Activated T-helper 1 cell treated with anti-CD3 and anti-CD28 coated beads, Interleukin-12 subunit alpha, Interleukin-12 subunit beta, Interleukin-2, Interleukin-4 antibody, amounts not matched to agents 30 ng/mL and 10 ng/mL and 1 ng/mL, durations not matched to agents 14 hours and 24 hours and 36 hours (primary cell): ENCODE measurements at regions of chr1 and their contacts with region 1.

Region 1: GRCh38 chr1:155227261-155228095 is 19.0 kb downstream of the MTX1 start:
- DNase-seq: peak; percentile 98
- H3K4me3 Mint-ChIP-seq: peak overlapping the region; percentile 95
- H3K27ac Mint-ChIP-seq: peak overlapping the region; percentile 92
- H3K4me1 Mint-ChIP-seq: peaks cover 15% of the 10 kb centered on the region
- H3K27me3 Mint-ChIP-seq: no peaks in the 10 kb centered on the region

Region 2: GRCh38 chr1:155017041-155017945 is 210.2 kb before region 1 on chr1:
- intact Hi-C with region 1: no loop called
- DNase-seq: peak; percentile 81
- H3K4me3 Mint-ChIP-seq: peak overlapping the region; percentile 69
- H3K27ac Mint-ChIP-seq: peak overlapping the region; percentile 7
- H3K4me1 Mint-ChIP-seq: peaks cover 54% of the 10 kb centered on the region
- H3K27me3 Mint-ChIP-seq: no peaks in the 10 kb centered on the region

Region 3: GRCh38 chr1:155193275-155193990 is 34.0 kb before region 1 on chr1:
- intact Hi-C with region 1: loop called (anchors 1 kb)
- DNase-seq: peak; percentile 72
- H3K4me3 Mint-ChIP-seq: peak overlapping the region; percentile 88
- H3K27ac Mint-ChIP-seq: peak overlapping the region; percentile 97
- H3K4me1 Mint-ChIP-seq: peaks cover 39% of the 10 kb centered on the region
- H3K27me3 Mint-ChIP-seq: no peaks in the 10 kb centered on the region

Region 4: DNA sequence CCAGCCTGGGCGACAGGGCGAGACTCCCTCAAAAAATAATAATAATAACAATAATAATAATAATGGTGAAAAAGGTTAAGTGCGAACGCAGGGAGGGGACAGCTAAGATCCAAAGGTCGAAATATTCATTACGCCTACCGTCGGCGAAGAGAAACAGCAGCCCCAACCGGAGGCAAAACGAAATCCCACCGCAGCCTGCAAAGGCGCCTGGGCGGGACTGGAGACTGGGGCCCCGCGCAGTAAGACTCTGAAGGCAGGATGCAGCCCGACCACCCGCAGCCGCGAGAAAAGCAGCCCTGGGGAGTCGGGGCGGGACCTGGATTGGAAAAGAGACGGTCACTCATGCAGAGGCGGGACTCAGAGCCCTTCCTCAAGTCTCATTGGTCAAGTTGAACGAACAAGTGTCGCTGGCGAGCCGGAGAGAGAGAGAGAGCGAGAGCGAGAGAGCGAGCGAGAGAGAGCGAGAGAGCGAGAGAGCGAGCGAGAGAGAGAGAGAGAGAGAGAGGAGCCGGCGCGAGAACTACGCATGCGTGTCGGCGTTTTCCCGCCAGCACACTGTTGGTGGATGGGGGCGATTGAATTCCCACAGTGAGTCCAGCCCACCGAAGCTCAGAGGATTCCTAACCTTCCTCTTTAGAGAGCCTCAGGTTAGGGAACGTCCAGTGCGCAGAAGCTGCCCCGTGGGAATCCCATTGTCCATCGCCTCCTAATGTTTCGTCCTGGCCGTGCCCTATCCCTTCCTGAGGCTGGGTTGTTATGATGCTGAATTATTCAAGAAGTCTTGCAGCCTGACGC is 17.1 kb after region 1 on chr1:
- intact Hi-C with region 1: loop called (anchors 1 kb)
- DNase-seq: peak; percentile 95
- H3K4me3 Mint-ChIP-seq: peak overlapping the region; percentile 86
- H3K27ac Mint-ChIP-seq: peak overlapping the region; percentile 100
- H3K4me1 Mint-ChIP-seq: peaks cover 50% of the 10 kb centered on the region
- H3K27me3 Mint-ChIP-seq: peaks cover 2% of the 10 kb centered on the region

Region 5: DNA sequence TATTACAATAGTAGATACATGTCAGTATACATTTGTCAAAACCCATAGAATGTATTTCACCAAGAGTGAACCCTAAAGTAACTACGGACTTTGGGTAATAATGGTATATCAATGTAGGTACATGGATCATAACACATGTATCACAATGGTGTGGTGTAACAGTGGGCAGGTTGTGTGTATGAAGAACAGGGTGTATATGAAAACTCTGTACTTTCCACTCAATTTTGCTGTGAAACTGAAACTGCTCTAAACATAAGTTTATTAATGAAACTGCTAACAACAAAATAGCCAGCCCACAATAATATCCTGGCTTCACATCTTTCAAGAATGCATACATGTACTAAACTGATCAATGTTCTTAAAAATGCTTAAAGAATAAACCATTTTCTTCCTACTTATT is 183.5 kb after region 1 on chr1:
- intact Hi-C with region 1: no loop called
- DNase-seq: no peak
- H3K4me3 Mint-ChIP-seq: no peak overlapping the region
- H3K27ac Mint-ChIP-seq: peak overlapping the region; percentile 68
- H3K4me1 Mint-ChIP-seq: peaks cover 28% of the 10 kb centered on the region
- H3K27me3 Mint-ChIP-seq: no peaks in the 10 kb centered on the region